ENCODE measurements at regions of chr11 and their contacts with region 1.

Region 1: DNA sequence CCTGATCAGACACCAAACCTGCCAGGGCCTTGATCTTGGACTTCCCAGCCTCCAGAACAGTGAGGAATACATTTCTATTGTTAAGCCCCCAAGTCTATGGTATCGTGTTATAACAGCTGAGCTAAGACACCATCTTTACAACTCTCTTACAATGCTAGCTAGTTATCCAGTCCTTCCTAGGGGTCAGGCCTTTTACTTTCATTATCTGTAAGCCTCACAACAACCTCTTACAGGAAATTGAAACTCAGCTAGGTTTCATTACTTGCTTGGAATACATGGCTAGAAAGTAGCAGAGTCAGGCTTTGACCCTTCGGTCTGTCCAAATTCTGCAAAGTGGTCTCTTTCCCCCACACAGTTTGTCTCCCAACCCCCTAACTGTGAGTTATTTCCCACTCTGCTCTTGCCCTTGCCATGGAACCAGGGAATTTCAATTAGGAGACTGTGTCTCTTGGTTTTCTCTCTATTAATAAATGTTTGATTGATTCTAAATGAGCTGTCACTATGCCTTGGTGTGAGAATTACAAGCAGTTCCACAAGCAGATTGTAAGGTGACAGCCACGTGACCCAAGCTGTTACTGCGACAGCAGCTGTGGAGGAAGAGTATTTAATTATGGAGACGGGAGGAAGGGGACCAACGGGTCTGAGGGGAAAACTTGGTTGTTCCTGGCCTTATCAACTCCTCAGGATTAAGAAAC is 38.4 kb upstream of the CLMP start:
- DNase-seq: no peak
- H3K4me3 ChIP-seq: no peak overlapping the region
- H3K27ac ChIP-seq: peak overlapping the region; percentile 29 to 77 (median 64)
- H3K4me1 ChIP-seq: peaks cover 0 to 48% (median 27%) of the 10 kb centered on the region in 4 donors
- H3K27me3 ChIP-seq: no peaks in the 10 kb centered on the region
- CTCF ChIP-seq: no peak
- EP300 ChIP-seq: no peak
- POLR2A ChIP-seq: no peak

Region 2: GRCh38 chr11:123166071-123166559 is 67.3 kb before region 1 on chr11:
- intact Hi-C with region 1: loop called (anchors 5 kb)
- DNase-seq: peak; percentile 84
- H3K4me3 ChIP-seq: no peak overlapping the region
- H3K27ac ChIP-seq: peak overlapping the region; percentile 68 to 83 (median 80)
- H3K4me1 ChIP-seq: peaks cover 0 to 74% (median 56%) of the 10 kb centered on the region in 4 donors
- H3K27me3 ChIP-seq: no peaks in the 10 kb centered on the region
- CTCF ChIP-seq: peak; percentile 20 to 71 (median 56)
- EP300 ChIP-seq: no peak
- POLR2A ChIP-seq: no peak

Region 3: DNA sequence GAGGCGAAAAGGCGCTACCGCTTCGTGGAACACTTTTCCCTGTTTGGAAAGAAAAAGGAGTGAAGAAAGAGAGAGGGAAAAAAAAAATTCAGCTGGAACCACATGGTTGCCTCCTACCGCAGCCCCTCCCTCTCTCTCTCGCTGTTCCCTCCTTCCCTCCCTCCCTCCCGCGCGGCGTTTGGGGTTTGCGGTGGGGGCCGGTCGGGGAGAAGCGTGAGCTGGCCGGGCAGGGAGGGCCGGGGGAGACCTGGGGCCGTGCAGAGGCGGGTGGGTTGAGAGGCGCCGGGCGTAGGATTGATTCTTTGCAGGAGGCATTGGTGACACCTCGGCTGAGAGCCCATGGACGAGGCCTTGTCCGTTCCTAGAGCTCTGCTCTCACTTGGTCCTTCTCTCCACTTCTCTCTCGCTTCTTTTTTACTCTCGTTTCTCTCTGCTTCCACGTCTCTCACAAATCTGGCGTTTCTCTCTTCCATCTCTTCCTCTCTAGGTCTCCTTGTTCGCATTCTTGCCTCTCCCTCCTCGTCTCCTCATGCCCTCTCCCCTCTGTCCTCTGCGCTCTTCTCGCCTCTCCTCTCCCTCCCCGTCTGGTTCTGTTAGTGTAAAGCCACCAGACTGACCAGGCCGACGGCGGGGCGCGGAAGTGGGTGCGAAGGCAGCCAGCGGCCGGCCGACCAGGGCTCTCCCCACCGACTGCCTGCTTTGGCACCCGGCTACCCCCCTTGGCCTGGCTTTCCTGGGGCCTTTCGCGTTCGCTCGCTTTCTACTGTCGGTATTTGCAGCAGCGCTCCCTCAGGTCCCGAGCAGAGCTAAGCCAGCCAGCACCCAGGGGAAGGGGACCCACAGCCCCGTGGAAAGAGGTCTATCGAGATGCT is 38.0 kb before region 1 on chr11 and contains the start of gene CLMP:
- intact Hi-C with region 1: loop called (anchors 5 kb)
- DNase-seq: peak; percentile 93
- H3K4me3 ChIP-seq: peak within 1 kb of the TSS; percentile 52 to 72 (median 59)
- H3K27ac ChIP-seq: peak within 1 kb of the TSS; percentile 89 to 97 (median 92)
- H3K4me1 ChIP-seq: peaks cover 0 to 46% (median 41%) of the 10 kb centered on the region in 4 donors
- H3K27me3 ChIP-seq: no peaks in the 10 kb centered on the region
- CTCF ChIP-seq: no peak
- EP300 ChIP-seq: no peak
- POLR2A ChIP-seq: no peak
- total RNA-seq, gene CLMP: 104 to 180 (median 164) TPM

Region 4: GRCh38 chr11:123206791-123207434 is 26.5 kb before region 1 on chr11:
- intact Hi-C with region 1: no loop called
- DNase-seq: peak; percentile 85
- H3K4me3 ChIP-seq: no peak overlapping the region
- H3K27ac ChIP-seq: peak overlapping the region; percentile 63 to 84 (median 82)
- H3K4me1 ChIP-seq: peaks cover 0 to 85% (median 65%) of the 10 kb centered on the region in 4 donors
- H3K27me3 ChIP-seq: no peaks in the 10 kb centered on the region
- CTCF ChIP-seq: no peak
- EP300 ChIP-seq: peak in 3 of 4 donors; percentile 57 to 81 (median 68)
- POLR2A ChIP-seq: no peak

Measured in sigmoid colon (tissue), 7 donors.